Naive thymus-derived CD4-positive, alpha-beta T cell (primary cell): ENCODE measurements at regions of chr7 and their contacts with region 1.

Region 1: DNA sequence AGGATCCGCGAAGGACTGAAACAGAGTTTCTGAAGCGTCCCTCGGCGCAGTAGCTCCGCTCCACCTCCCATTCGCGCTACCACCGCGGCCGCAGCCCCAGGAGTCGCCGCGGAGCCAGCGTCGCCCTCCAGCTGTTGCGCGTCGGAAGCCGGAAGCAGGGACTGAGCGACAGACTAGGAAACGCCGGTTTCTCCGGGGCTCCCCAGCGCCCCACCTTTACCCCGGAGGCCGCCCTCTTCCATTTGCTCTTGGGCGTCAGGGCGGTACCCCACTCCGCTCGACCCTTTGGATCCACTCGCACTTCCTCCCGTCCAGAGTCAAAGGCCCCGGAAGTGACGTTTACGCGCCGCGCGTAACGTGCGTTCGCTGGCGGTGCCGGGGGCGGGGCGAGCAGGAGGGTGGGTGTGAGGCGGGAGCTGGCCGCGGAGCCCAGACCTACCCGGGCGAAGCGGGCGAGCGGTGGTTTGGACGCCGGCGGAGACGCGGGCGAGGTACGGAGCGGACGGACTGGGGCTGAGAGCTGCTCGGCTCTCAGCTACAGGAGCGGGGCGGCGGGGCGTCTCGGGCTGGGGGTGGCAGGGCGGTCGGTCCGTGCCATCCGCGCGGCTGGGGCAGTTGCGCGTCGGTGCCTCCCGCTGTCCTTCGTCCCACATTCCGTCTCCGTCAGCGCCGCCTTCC is at the start of gene RABGEF1:
- DNase-seq: peak; percentile 94 to 98 (median 95)
- ATAC-seq: peak; percentile 95
- H3K4me3 ChIP-seq: peak within 1 kb of the TSS; percentile 82
- H3K4me3 Mint-ChIP-seq: peak within 1 kb of the TSS; percentile 89 to 98 (median 94)
- H3K27ac ChIP-seq: peak within 1 kb of the TSS; percentile 84
- H3K27ac Mint-ChIP-seq: peak within 1 kb of the TSS; percentile 94 to 98 (median 96)
- H3K4me1 ChIP-seq: peaks cover 0 to 6% of the 10 kb centered on the region in 2 donors
- H3K4me1 Mint-ChIP-seq: peaks cover 30 to 74% (median 54%) of the 10 kb centered on the region in 7 donors
- H3K27me3 ChIP-seq: no peaks in the 10 kb centered on the region
- H3K27me3 Mint-ChIP-seq: no peaks in the 10 kb centered on the region
- total RNA-seq, gene RABGEF1: 20.7 to 35.7 (median 22.2) TPM

Region 2: GRCh38 chr7:66609176-66609575 is 131.3 kb before region 1 on chr7:
- CTCF ChIA-PET with region 1: no interaction called
- POLR2A ChIA-PET with region 1: no interaction called
- intact Hi-C with region 1: no loop called
- DNase-seq: no peak
- ATAC-seq: no peak
- H3K4me3 ChIP-seq: no peak overlapping the region
- H3K4me3 Mint-ChIP-seq: no peak overlapping the region
- H3K27ac ChIP-seq: no peak overlapping the region
- H3K27ac Mint-ChIP-seq: no peak overlapping the region
- H3K4me1 ChIP-seq: no peaks in the 10 kb centered on the region
- H3K4me1 Mint-ChIP-seq: no peaks in the 10 kb centered on the region
- H3K27me3 ChIP-seq: no peaks in the 10 kb centered on the region
- H3K27me3 Mint-ChIP-seq: no peaks in the 10 kb centered on the region

Region 3: DNA sequence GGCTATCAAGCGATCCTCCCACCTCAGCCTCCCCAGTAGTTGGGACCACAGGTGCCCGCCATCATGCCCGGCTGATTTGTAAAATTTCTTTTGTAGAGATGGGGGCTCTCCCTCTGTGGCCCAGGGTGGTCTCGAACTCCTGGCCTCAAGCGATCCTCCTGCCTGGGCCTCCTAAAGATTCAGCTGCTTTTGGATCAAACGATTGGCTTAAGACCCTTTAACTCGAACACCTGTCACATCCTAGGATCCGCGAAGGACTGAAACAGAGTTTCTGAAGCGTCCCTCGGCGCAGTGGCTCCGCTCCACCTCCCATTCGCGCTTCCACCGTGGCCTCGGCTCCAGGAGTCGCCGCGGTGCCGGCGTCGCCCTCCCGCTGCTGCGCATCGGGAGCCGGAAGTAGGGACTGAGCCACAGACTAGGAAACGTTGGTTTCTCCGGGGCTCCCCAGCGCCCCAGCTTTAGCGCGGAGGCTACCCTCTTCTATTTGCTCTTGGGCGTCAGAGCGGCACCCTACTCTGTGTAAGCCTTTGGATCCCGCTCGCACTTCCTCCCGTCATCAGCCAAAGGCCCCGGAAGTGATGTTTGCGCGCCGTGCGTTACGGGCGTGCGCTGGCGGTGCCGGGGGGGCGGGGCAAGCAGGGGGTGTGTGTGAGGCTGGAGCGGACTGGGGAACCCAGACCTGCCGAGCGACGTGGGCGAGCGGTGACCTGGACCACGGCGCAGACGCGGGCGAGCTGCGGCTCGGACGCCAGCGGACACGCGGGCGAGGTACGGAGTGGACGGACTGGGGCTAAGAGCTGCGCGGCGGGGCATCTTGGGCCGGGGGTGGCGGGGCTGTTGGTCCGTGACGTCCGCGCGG is 58.7 kb before region 1 on chr7:
- CTCF ChIA-PET with region 1: no interaction called
- POLR2A ChIA-PET with region 1: interaction called, 6 read pairs
- intact Hi-C with region 1: loop called (anchors 1 kb)
- DNase-seq: peak; percentile 92 to 97 (median 95)
- ATAC-seq: peak; percentile 98
- H3K4me3 ChIP-seq: peak overlapping the region; percentile 96
- H3K4me3 Mint-ChIP-seq: peak overlapping the region; percentile 82 to 96 (median 92)
- H3K27ac ChIP-seq: peak overlapping the region; percentile 95
- H3K27ac Mint-ChIP-seq: peak overlapping the region; percentile 86 to 98 (median 97)
- H3K4me1 ChIP-seq: peaks cover 5 to 11% of the 10 kb centered on the region in 2 donors
- H3K4me1 Mint-ChIP-seq: peaks cover 7 to 59% (median 31%) of the 10 kb centered on the region in 7 donors
- H3K27me3 ChIP-seq: no peaks in the 10 kb centered on the region
- H3K27me3 Mint-ChIP-seq: no peaks in the 10 kb centered on the region

Region 4: GRCh38 chr7:68676813-68677535 is 1936.5 kb after region 1 on chr7:
- CTCF ChIA-PET with region 1: no interaction called
- POLR2A ChIA-PET with region 1: no interaction called
- intact Hi-C with region 1: no loop called
- DNase-seq: no peak
- ATAC-seq: no peak
- H3K4me3 ChIP-seq: no peak overlapping the region
- H3K4me3 Mint-ChIP-seq: no peak overlapping the region
- H3K27ac ChIP-seq: no peak overlapping the region
- H3K27ac Mint-ChIP-seq: no peak overlapping the region
- H3K4me1 ChIP-seq: no peaks in the 10 kb centered on the region
- H3K4me1 Mint-ChIP-seq: no peaks in the 10 kb centered on the region
- H3K27me3 ChIP-seq: no peaks in the 10 kb centered on the region
- H3K27me3 Mint-ChIP-seq: no peaks in the 10 kb centered on the region